Posterior cingulate gyrus (tissue), 11 donors: ENCODE measurements at regions of chr10 and their contacts with region 1.

Region 1: GRCh38 chr10:86366033-86366901 is at the start of gene GRID1:
- DNase-seq: peak; percentile 65 to 96 (median 72)

Region 2: DNA sequence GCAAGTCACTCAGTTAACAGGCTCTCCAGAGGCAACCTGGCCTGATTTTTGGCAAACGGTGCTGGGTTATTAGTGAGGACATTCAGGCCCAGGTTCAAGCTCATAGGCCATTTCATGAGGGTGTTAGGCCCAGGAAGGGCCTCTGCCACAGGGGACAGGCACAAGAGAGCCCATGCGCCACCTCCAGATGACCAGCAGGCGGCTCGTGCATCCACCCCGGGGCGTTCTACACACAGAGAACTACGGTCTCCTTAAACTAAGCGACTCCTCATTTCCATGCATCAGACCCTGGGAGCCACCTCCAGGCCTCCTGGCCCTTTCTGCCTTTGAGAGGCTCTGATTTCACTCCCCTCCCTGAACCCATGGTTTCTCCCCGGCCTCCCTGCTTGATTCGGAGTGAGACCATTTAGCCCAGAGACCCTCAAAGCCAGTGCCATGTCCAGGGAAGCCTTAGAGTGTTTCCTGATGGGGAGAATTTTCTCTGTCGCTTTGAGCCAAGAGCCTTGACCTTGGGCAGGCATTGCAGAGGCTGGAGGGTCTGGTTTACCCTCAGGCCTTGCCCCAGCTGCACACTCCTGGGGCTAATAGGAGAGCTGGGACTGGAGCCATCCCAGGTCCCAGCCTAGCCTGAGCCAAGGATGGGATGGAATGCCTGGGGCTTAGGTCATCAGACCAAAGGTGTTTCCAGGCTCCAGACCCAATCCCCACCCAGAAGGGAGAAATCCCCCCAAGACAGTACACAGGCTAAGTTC is 187.7 kb before region 1 on chr10:
- intact Hi-C with region 1: loop called (anchors 2 kb)
- DNase-seq: peak in 4 of 10 donors; percentile 29 to 93 (median 60)

Region 3: GRCh38 chr10:86899670-86900276 is 533.5 kb after region 1 on chr10:
- intact Hi-C with region 1: no loop called
- DNase-seq: peak in 7 of 10 donors; percentile 16 to 87 (median 62)